WTC11 (cell line): ENCODE measurements at regions of chr10 and their contacts with region 1.

Region 1: DNA sequence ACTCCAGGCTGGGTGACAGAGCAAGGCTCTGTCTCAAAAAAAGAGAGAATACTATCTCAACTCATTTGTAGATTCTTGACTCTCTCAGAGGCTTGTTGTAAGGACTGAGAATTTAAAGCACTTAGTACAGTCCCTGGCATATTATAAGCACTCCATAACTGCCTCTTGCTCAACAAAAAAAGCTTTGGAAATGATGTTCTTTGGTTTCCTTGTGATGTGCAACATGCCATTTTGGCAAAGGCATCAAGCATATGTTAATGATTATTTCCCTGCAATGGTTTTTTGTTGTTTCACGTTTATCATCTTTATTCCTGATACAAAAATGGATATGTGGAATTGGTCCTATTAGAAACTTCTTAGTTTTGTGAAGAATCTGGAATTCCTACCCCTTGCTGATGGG is 15.7 kb downstream of the NOLC1 start:
- DNase-seq: no peak
- ATAC-seq: no peak
- H3K4me3 Mint-ChIP-seq: no peak overlapping the region
- H3K27ac Mint-ChIP-seq: no peak overlapping the region
- H3K4me1 Mint-ChIP-seq: peaks cover 8% of the 10 kb centered on the region
- H3K27me3 Mint-ChIP-seq: peaks cover 8% of the 10 kb centered on the region
- CTCF ChIP-seq: no peak

Region 2: DNA sequence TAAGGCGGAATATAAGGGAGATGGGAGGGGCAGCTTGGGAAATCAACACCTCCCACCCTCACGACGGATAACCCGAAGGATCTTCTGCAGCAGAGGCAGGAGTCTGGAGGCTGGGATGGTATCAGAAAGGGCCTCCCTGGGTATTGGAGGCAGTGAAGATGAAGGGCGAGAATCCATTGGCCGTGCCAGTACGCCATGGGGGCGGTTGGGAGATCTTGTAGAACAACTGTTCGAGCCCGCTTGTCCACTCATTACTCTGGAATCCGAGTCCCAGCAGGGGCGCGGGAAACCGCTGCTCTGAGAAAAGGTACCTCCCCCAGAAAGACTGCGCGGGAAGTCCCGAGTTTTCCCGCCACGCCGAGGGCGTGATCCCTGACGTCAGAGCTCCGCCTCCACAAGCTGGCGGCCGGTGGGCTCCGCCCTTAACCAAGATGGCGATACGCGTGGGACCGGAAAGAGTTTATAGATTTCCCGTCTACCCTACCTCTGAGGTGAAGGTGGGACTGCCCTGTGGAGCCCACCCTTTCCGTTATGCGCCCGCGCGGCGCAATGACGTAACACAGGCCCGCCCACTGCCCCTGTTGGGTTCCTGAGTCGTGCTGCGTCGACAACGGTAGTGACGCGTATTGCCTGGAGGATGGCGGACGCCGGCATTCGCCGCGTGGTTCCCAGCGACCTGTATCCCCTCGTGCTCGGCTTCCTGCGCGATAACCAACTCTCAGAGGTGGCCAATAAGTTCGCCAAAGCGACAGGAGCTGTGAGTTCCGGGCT is 15.9 kb before region 1 on chr10 and contains the start of gene NOLC1:
- CTCF ChIA-PET with region 1: interaction called, 18 read pairs
- POLR2A ChIA-PET with region 1: no interaction called
- DNase-seq: peak; percentile 100
- ATAC-seq: peak; percentile 95
- H3K4me3 Mint-ChIP-seq: peak within 1 kb of the TSS; percentile 98
- H3K27ac Mint-ChIP-seq: peak within 1 kb of the TSS; percentile 99
- H3K4me1 Mint-ChIP-seq: peaks cover 24% of the 10 kb centered on the region
- H3K27me3 Mint-ChIP-seq: no peaks in the 10 kb centered on the region
- CTCF ChIP-seq: no peak
- total RNA-seq, gene NOLC1: 125 to 165 TPM (median 129 TPM) in 3 replicates

Region 3: GRCh38 chr10:102352066-102352715 is 184.3 kb after region 1 on chr10:
- CTCF ChIA-PET with region 1: interaction called, 27 read pairs
- POLR2A ChIA-PET with region 1: no interaction called
- DNase-seq: peak; percentile 84
- ATAC-seq: peak; percentile 85
- H3K4me3 Mint-ChIP-seq: no peak overlapping the region
- H3K27ac Mint-ChIP-seq: no peak overlapping the region
- H3K4me1 Mint-ChIP-seq: no peaks in the 10 kb centered on the region
- H3K27me3 Mint-ChIP-seq: peaks cover 8% of the 10 kb centered on the region
- CTCF ChIP-seq: peak; percentile 94

Region 4: DNA sequence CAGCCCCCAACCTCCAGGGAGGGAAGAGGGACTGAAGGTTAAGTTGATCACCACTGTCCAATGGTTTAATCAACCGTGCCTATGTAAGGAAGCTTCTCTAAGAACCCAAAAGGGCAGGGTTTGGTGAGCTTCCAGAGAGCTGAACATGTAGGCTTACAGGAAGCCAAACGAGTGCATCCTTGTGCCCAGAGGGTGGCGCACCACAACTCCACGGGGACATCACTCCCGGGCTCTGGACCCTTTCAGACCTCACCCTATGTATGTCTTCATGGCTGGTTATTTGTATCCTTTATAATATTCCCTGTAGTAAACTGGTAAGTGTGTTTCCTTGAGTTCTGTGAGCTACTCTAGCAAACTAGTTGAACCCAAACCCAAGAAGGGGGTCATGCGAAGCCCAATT is 216.2 kb after region 1 on chr10:
- CTCF ChIA-PET with region 1: interaction called, 14 read pairs
- POLR2A ChIA-PET with region 1: no interaction called
- DNase-seq: peak; percentile 72
- ATAC-seq: peak; percentile 93
- H3K4me3 Mint-ChIP-seq: no peak overlapping the region
- H3K27ac Mint-ChIP-seq: no peak overlapping the region
- H3K4me1 Mint-ChIP-seq: no peaks in the 10 kb centered on the region
- H3K27me3 Mint-ChIP-seq: no peaks in the 10 kb centered on the region; the same call in 1 of the 2 replicates
- CTCF ChIP-seq: no peak

Region 5: DNA sequence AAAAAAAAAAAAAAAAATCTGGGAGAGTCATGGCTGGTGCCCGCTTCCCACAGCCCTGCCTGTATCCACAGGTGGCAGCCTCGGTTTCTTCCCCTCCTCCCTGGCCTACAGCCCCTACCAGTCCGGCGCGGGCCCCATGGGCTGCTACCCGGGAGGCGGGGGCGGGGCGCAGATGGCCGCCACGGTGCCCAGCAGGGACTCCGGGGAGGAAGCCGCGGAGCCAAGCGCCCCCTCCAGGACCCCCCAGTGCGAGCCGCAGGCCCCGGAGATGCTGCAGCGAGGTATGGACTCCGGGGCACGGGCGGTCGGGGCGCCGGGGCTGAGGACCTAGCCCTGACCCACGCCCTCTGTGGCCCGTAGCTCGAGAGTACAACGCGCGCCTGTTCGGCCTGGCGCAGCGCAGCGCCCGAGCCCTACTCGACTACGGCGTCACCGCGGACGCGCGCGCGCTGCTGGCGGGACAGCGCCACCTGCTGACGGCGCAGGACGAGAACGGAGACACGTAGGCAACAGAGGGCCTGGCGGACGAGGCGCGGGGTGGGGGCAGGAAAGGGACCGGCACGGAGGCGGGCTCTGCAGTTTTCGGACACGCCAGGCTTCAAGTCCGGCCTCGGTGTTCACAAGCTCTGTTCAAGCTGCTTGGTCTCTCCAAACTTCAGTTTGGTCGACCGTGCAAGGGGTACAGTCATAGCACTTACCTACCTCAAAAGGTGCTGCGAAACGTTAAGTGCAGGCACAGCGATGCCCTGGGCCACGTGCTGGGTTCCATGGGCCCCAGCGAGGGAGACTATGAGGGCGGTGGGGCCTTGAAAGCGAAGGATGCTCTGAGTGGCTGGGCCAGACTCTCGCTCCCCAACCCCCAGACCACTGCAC is 231.6 kb after region 1 on chr10:
- CTCF ChIA-PET with region 1: interaction called, 14 read pairs
- POLR2A ChIA-PET with region 1: no interaction called
- DNase-seq: peak; percentile 91
- ATAC-seq: peak; percentile 67
- H3K4me3 Mint-ChIP-seq: peak overlapping the region; percentile 58
- H3K27ac Mint-ChIP-seq: no peak overlapping the region
- H3K4me1 Mint-ChIP-seq: peaks cover 13% of the 10 kb centered on the region
- H3K27me3 Mint-ChIP-seq: peaks cover 23% of the 10 kb centered on the region
- CTCF ChIP-seq: peak; percentile 92